ENCODE measurements at regions of chr20 and their contacts with region 1.

Region 1: DNA sequence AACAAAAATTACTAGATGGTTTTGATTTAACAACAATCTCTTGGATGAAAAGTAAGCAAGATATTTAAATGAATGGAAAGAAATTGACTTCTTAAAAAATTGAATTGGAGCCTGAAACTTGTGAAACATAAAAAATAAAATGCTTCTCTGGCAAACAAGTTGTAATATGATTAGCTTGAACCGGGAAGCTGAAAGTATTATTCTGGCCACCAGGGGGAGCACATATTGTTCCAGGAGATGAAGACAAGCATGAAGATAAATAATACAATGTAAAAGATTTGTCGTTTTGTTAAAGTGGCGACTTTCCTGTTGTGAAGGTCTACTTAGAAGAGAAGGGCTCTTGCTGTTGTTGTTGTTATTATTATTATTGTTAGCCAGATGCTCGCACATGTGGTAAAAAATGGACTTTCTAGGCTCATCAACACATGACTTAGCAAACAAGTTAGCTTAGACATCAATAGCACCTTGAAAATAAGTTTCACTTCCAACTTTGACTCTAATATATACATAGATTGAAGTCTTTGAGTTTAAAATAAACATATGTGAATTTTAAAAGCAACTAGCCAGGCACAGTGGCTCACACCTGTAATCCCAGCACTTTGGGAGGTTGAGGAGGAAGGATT is 14.2 kb downstream of the PAX1 start:
- DNase-seq: peak; percentile 12
- ATAC-seq: peak; percentile 71
- H3K4me3 ChIP-seq: no peak overlapping the region
- H3K27ac ChIP-seq: no peak overlapping the region
- H3K4me1 ChIP-seq: no peaks in the 10 kb centered on the region
- H3K27me3 ChIP-seq: peaks cover 0 to 4% of the 10 kb centered on the region in 2 experiments; a peak in 1 of 4 replicates
- CTCF ChIP-seq: peak; percentile 59 to 70 (median 66)
- EP300 ChIP-seq: no peak
- POLR2A ChIP-seq: no peak
- RAD21 ChIP-seq: peak; percentile 47

Region 2: GRCh38 chr20:21767739-21768223 is 48.1 kb after region 1 on chr20:
- CTCF ChIA-PET with region 1: interaction called, 34 read pairs
- POLR2A ChIA-PET with region 1: no interaction called
- RAD21 ChIA-PET with region 1: interaction called, 10 read pairs
- SMC1A ChIA-PET with region 1: interaction called, 10 read pairs
- in situ Hi-C with region 1: no loop called
- intact Hi-C with region 1: no loop called
- DNase-seq: no peak
- ATAC-seq: no peak
- H3K4me3 ChIP-seq: no peak overlapping the region
- H3K27ac ChIP-seq: no peak overlapping the region
- H3K4me1 ChIP-seq: no peaks in the 10 kb centered on the region
- H3K27me3 ChIP-seq: no peaks in the 10 kb centered on the region
- CTCF ChIP-seq: peak in 2 of 3 experiments; percentile 15; a peak in 1 of 6 replicates
- EP300 ChIP-seq: no peak
- POLR2A ChIP-seq: no peak
- RAD21 ChIP-seq: no peak

Region 3: GRCh38 chr20:22248051-22248667 is 528.5 kb after region 1 on chr20:
- CTCF ChIA-PET with region 1: interaction called, 6 read pairs
- POLR2A ChIA-PET with region 1: no interaction called
- RAD21 ChIA-PET with region 1: no interaction called
- SMC1A ChIA-PET with region 1: interaction called, 4 read pairs
- in situ Hi-C with region 1: no loop called
- intact Hi-C with region 1: loop called (anchors 5 kb)
- DNase-seq: no peak
- ATAC-seq: peak; percentile 52
- H3K4me3 ChIP-seq: no peak overlapping the region
- H3K27ac ChIP-seq: no peak overlapping the region
- H3K4me1 ChIP-seq: no peaks in the 10 kb centered on the region
- H3K27me3 ChIP-seq: no peaks in the 10 kb centered on the region
- CTCF ChIP-seq: peak; percentile 59 to 70 (median 59); a peak in 5 of 6 replicates
- EP300 ChIP-seq: no peak
- POLR2A ChIP-seq: no peak
- RAD21 ChIP-seq: peak; percentile 64

Region 4: GRCh38 chr20:22312744-22313346 is 593.1 kb after region 1 on chr20:
- CTCF ChIA-PET with region 1: interaction called, 7 read pairs
- POLR2A ChIA-PET with region 1: no interaction called
- RAD21 ChIA-PET with region 1: interaction called, 3 read pairs
- SMC1A ChIA-PET with region 1: interaction called, 6 read pairs
- in situ Hi-C with region 1: loop called (anchors 10 kb)
- intact Hi-C with region 1: loop called (anchors 2 kb)
- DNase-seq: no peak
- ATAC-seq: peak; percentile 50; the same call in 2 of the 3 replicates
- H3K4me3 ChIP-seq: no peak overlapping the region
- H3K27ac ChIP-seq: no peak overlapping the region
- H3K4me1 ChIP-seq: no peaks in the 10 kb centered on the region
- H3K27me3 ChIP-seq: no peaks in the 10 kb centered on the region
- CTCF ChIP-seq: peak; percentile 47 to 62 (median 49); a peak in 5 of 6 replicates
- EP300 ChIP-seq: no peak
- POLR2A ChIP-seq: no peak
- RAD21 ChIP-seq: peak; percentile 49